ENCODE measurements at regions of chr11 and their contacts with region 1.

Region 1: DNA sequence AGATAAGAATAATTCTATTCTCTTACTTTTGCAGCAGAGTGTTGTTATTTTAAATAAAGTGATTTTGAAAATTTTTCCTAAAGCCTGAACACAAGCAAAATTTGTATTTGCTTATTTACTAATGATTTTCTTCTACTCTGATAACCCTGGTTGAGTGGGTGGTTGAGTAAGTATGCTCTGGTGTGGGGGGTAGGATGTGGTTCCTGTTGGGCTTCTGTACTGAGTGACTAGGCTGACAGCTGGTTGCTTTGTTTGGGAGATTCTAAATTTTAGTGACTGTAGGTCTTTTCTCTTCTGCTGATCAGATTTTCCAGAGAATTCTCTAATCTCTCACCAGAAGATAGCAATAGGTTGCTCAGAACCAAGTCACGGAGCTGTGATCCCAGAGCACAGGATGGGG is 61.6 kb downstream of the METTL15 start:
- DNase-seq: no peak
- H3K27ac ChIP-seq: no peak overlapping the region
- CTCF ChIP-seq: no peak

Region 2: GRCh38 chr11:28123151-28123581 is 46.6 kb before region 1 on chr11:
- CTCF ChIA-PET with region 1: interaction called, 10 read pairs
- POLR2A ChIA-PET with region 1: no interaction called
- DNase-seq: no peak
- H3K27ac ChIP-seq: no peak overlapping the region
- CTCF ChIP-seq: no peak

Region 3: GRCh38 chr11:28144808-28145207 is 25.0 kb before region 1 on chr11:
- CTCF ChIA-PET with region 1: no interaction called
- POLR2A ChIA-PET with region 1: no interaction called
- DNase-seq: no peak
- H3K27ac ChIP-seq: no peak overlapping the region
- CTCF ChIP-seq: no peak